Right cardiac atrium (tissue), 5 donors: ENCODE measurements at regions of chr3 and their contacts with region 1.

Region 1: GRCh38 chr3:193040836-193041672 is 123.4 kb upstream of the MB21D2 start:
- DNase-seq: no peak
- ATAC-seq: no peak
- H3K4me3 ChIP-seq: no peak overlapping the region
- H3K27ac ChIP-seq: no peak overlapping the region
- H3K4me1 ChIP-seq: no peaks in the 10 kb centered on the region
- H3K27me3 ChIP-seq: no peaks in the 10 kb centered on the region

Region 2: DNA sequence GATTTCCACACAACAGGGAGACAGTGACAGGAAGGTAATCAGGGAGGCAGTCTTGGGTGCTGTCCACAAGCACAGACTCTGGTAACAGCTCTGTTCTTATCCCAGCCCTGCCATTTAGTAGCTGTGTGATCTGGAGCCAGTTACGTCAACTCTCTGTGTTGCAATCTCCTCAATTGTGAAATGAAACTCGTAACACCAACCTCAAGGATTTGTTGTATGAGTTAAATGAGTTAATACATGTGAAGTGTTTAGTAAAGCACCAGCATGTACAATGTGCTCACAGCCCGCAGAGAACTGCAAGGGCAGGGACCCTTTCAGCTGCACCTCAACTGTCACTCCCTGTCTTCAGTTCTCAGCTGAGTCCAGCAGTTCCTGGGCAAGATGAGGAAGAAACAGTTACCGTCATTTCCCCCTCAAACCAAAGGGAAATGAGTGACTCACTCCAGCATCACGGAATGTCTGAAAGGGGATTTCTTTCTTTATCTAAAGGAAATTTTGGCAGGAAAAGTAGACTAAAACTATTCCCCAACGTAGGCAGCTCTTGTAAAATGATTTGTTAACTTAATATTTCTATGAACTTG is 83.5 kb before region 1 on chr3:
- intact Hi-C with region 1: no loop called
- DNase-seq: peak; percentile 64 to 76 (median 68)
- ATAC-seq: peak; percentile 98 to 99
- H3K4me3 ChIP-seq: no peak overlapping the region
- H3K27ac ChIP-seq: peak overlapping the region; percentile 90
- H3K4me1 ChIP-seq: no peaks in the 10 kb centered on the region
- H3K27me3 ChIP-seq: no peaks in the 10 kb centered on the region

Region 3: DNA sequence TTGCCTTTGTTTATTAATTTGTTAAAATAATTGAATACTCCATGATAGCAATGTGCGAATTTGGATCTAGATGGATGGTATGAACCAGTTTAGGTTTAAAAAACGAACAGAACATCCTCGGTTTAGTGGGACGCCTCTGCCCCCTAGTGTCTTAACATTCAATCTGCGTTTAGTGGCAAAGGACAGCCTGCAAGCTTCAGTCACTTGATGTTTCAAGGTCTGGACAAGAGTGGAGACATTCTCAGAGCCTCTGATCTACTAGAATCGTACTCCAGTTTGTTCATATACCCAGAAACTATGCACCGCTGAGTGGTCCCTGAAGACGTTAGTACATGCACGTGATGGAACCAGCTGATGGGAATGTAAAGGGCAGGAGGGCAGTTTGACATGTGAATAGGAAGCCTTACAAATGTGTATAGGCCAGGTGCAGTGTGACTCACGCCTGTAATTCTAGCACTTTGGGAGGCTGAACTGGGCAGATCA is 531.4 kb after region 1 on chr3:
- intact Hi-C with region 1: loop called in 2 of 4 experiments (anchors 5 to 10 kb)
- DNase-seq: peak in 2 of 3 donors; percentile 35 to 61
- ATAC-seq: peak; percentile 65 to 66
- H3K4me3 ChIP-seq: no peak overlapping the region
- H3K27ac ChIP-seq: no peak overlapping the region
- H3K4me1 ChIP-seq: no peaks in the 10 kb centered on the region
- H3K27me3 ChIP-seq: no peaks in the 10 kb centered on the region